Dorsolateral prefrontal cortex (tissue), 120 donors: ENCODE measurements at regions of chr17 and their contacts with region 1.

Region 1: DNA sequence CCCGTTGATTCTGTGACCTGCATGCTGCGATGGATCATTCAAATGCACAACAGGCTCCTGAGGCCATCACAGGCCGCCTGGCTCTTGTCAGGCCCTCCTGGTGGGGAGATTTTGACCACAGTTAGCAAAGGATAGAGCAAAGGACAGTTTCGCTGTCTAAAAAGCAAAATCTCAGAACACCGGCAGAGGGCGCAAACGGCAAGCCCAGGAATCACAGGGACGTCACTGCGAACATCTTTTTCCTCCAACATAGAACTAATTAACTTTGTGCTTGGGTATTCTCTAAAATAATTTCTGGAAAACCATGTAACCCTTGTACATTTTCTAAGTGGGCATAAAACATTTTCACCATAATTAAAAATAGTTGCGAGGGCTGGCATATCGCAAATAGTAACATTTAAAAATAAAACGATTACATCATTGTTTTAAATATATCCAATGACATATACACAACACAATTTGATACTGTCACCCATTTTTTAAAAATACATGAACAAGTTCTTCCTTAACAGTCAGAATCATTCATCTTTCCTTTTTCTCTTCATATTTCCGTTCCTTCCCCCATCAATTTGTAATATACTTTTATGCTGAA is 19.7 kb upstream of the SLC47A1 start:
- DNase-seq: peak in 9 of 10 donors; percentile 59 to 81 (median 73)
- H3K4me3 ChIP-seq: peak overlapping the region in 34 of 59 donors; percentile 0 to 50 (median 22)
- H3K27ac ChIP-seq: peak overlapping the region in 51 of 59 donors; percentile 6 to 81 (median 59)
- H3K27me3 ChIP-seq: no peaks in the 10 kb centered on the region
- CTCF ChIP-seq: peak; percentile 80 to 97 (median 92)

Region 2: GRCh38 chr17:19317359-19318095 is 196.5 kb before region 1 on chr17:
- intact Hi-C with region 1: no loop called
- DNase-seq: peak; percentile 86 to 98 (median 97)
- H3K4me3 ChIP-seq: peak overlapping the region in 21 of 59 donors; percentile 0 to 33 (median 17)
- H3K27ac ChIP-seq: peak overlapping the region; percentile 81 to 100 (median 96)
- H3K27me3 ChIP-seq: no peaks in the 10 kb centered on the region
- CTCF ChIP-seq: peak in 54 of 56 donors; percentile 13 to 77 (median 54)

Region 3: DNA sequence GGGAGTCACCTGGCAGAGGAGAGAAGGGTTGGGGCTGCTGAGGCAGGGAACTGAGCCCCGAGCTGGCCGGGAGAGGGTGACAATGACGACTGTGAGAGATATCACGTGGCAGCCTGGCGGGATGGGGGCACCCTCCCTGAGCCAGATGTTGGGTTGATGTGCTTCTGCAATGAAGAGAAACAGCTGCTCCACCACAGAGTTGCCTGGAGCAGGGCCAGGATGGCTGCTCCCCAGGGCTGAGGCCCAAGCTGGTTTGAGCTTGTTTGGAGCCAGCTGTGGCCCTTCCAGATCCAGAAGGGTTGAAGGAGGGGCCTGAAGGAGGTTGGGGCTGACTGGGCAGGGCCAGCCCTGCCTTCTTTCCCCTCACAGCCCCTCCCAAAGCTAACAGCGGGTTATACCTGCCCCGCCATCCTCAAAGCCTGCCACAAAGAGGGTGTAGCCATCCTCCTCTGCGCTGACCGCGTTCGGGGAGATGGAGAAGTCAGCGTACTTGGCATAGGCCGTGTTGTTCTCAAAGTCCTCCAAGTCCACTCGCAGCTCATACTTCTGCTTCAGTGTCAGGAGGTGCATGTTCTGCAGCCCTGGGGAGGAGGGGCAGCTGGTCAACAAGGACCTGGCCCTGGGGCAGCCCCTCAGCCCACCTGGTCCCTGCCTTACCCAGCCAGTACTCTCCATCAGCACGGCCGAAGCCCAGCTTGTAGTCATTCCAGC is 129.1 kb before region 1 on chr17:
- intact Hi-C with region 1: loop called in 1 of 2 experiments (anchors 5 kb)
- DNase-seq: peak in 9 of 10 donors; percentile 85 to 95 (median 89)
- H3K4me3 ChIP-seq: peak overlapping the region in 18 of 59 donors; percentile 1 to 45 (median 16)
- H3K27ac ChIP-seq: peak overlapping the region; percentile 5 to 93 (median 81)
- H3K27me3 ChIP-seq: no peaks in the 10 kb centered on the region
- CTCF ChIP-seq: peak in 12 of 56 donors; percentile 9 to 34 (median 17)

Region 4: DNA sequence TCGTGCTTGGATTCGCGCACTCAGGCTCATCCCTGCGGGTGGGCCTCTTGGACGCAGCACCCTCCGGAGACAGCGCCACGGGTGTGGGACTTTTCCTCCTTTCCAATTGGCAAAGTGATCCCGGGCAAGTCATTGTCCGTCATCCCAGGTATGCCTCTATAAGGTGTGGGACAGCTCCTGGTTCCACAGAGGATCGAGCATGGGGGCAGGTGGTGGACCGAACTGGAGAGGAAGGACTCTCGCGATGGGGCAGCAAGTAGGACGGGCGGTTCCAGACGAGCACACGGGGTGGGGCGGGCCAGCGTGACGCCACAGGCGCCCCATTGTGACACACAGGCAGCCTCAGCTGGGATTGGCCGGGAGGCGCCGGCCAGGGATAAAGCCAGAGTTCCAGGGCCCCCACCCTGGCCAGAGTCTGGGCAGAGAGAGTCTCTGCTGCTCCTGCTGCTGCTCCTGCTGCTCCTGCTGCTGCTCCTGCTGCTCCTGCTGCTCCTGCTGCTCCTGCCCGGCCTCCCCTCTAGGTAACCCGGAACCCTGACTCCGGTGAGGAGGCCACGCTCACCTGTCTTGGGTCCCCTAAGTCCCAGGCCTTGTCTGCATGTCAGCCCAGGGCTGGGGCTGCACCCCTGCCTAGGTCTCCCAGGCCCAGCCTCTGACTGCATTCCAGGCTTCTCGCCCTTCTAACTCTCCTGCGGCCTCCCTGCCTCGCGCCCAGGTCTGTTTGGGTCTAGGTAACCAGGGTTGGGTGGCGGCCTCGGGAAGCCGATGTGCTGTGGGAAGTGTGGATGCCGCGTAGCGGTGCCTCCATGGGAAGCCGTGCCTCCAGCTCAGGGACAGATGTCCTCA is 18.8 kb before region 1 on chr17:
- intact Hi-C with region 1: no loop called
- DNase-seq: no peak
- H3K4me3 ChIP-seq: no peak overlapping the region
- H3K27ac ChIP-seq: no peak overlapping the region
- H3K27me3 ChIP-seq: no peaks in the 10 kb centered on the region
- CTCF ChIP-seq: no peak

Region 5: GRCh38 chr17:19596869-19597268 is 82.9 kb after region 1 on chr17:
- intact Hi-C with region 1: no loop called
- DNase-seq: no peak
- H3K4me3 ChIP-seq: no peak overlapping the region
- H3K27ac ChIP-seq: no peak overlapping the region
- H3K27me3 ChIP-seq: no peaks in the 10 kb centered on the region
- CTCF ChIP-seq: no peak

Region 6: DNA sequence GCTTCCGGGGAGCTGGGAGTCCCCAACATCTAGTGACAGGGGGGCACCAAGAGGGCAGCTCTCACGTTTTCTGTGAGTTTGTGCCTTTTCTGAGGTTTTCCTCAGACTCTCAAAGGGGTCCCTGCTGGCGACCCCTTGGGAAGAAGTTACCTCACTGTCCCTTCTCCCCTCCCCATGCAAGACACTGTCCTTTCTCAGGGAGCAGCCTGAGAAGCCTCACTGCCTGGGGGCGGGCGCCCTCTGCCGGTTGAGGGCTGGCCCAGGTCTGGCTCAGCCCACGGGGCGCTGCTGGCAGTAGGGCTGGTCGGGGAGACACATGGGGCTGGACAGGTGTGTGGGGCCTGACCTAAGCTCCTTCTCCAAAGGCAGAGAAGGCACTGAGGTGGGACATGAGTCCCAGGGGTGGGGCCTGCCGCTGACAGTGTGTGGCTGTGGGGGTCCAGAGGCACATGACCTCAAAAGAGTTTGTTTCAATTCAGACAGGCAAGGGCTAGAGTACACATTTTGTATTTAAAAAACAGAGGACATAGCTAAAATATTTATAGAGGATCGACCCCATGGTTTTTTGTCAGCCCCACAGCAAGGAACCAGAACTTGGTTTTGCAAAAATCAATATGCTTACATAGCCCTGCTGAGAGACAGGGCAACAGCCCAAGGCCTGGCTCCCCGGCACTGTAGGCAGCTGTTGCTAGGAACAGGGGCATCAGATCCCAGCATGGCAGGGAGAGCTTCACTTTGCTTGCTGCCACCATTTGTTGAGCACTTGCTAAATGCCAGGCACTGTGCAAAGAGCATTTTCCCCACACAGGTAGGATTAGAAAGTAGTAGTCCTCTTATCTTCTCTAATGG is 252.7 kb after region 1 on chr17:
- intact Hi-C with region 1: loop called (anchors 2 to 5 kb)
- DNase-seq: peak; percentile 77 to 91 (median 84)
- H3K4me3 ChIP-seq: peak overlapping the region in 4 of 59 donors; percentile 5 to 23 (median 8)
- H3K27ac ChIP-seq: peak overlapping the region in 9 of 59 donors; percentile 6 to 58 (median 39)
- H3K27me3 ChIP-seq: no peaks in the 10 kb centered on the region
- CTCF ChIP-seq: peak; percentile 71 to 99 (median 97)